GM12878 (cell line): ENCODE measurements at regions of chr1 and their contacts with region 1.

Region 1: GRCh38 chr1:94552071-94552586 is 10.6 kb upstream of the F3 start:
- DNase-seq: no peak
- ATAC-seq: peak; percentile 65
- H3K4me3 ChIP-seq: no peak overlapping the region
- H3K27ac ChIP-seq: no peak overlapping the region
- H3K4me1 ChIP-seq: no peaks in the 10 kb centered on the region
- H3K27me3 ChIP-seq: peaks cover 0 to 3% of the 10 kb centered on the region in 2 experiments; a peak in 2 of 4 replicates
- CTCF ChIP-seq: no peak
- EP300 ChIP-seq: no peak
- POLR2A ChIP-seq: no peak
- RAD21 ChIP-seq: no peak

Region 2: GRCh38 chr1:94541175-94542087 is 10.7 kb before region 1 on chr1 and contains the start of gene F3:
- CTCF ChIA-PET with region 1: interaction called, 4 read pairs
- POLR2A ChIA-PET with region 1: interaction called, 10 read pairs
- RAD21 ChIA-PET with region 1: interaction called, 4 read pairs
- SMC1A ChIA-PET with region 1: interaction called, 4 read pairs
- in situ Hi-C with region 1: no loop called
- intact Hi-C with region 1: no loop called
- DNase-seq: no peak
- ATAC-seq: peak; percentile 89
- H3K4me3 ChIP-seq: peak within 1 kb of the TSS; percentile 61
- H3K27ac ChIP-seq: no peak within 1 kb of the TSS
- H3K4me1 ChIP-seq: peaks cover 12% of the 10 kb centered on the region; the same call in 1 of the 2 replicates
- H3K27me3 ChIP-seq: peaks cover 5 to 12% of the 10 kb centered on the region in 2 experiments
- CTCF ChIP-seq: no peak
- EP300 ChIP-seq: no peak
- POLR2A ChIP-seq: peak; percentile 54; the same call in 1 of the 2 replicates
- RAD21 ChIP-seq: no peak
- polyA plus RNA-seq, gene F3: not detected

Region 3: DNA sequence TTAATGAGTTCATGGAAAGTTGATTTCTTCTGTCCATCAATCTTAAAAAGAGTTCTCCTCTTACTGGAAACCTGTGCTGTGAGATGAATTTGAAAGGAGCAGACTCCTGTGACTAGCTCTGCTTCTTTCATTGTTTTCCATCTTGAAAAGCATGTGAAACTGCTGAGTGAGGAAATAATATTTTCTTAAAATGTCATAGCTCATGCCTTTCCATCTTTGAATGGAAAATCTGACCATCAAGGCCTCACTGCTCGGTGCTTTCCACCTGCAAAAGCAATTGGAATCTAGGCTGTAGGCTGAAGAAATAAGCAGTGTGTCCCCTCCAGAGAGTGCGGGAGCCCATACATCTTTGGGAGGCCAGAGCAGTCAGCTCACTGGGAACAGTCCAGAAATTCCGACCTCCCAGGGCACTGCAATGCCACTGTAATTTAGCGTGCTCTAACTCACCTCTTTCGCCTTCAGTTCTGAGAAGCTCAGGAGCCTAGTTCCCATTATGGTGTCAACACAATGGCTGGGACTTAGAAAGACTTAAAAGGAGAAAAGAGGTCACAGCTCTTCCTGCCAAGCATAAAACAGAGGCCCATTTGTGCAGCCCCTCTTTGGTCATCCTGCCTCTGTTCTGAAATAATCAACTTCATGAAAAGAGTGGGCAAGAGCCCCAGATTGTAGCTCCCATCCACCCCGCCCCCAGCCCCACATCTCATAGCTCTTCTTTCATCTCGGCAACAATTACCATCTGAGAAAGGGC is 39.9 kb after region 1 on chr1:
- CTCF ChIA-PET with region 1: no interaction called
- POLR2A ChIA-PET with region 1: no interaction called
- RAD21 ChIA-PET with region 1: no interaction called
- SMC1A ChIA-PET with region 1: no interaction called
- in situ Hi-C with region 1: no loop called
- intact Hi-C with region 1: no loop called
- DNase-seq: no peak
- ATAC-seq: no peak
- H3K4me3 ChIP-seq: no peak overlapping the region
- H3K27ac ChIP-seq: no peak overlapping the region
- H3K4me1 ChIP-seq: no peaks in the 10 kb centered on the region
- H3K27me3 ChIP-seq: no peaks in the 10 kb centered on the region; a peak in 1 of 4 replicates
- CTCF ChIP-seq: no peak
- EP300 ChIP-seq: no peak
- POLR2A ChIP-seq: no peak
- RAD21 ChIP-seq: no peak